Activated naive CD4-positive, alpha-beta T cell treated with anti-CD3 and anti-CD28 coated beads for 36 hours (primary cell): ENCODE measurements at regions of chr7 and their contacts with region 1.

Region 1: DNA sequence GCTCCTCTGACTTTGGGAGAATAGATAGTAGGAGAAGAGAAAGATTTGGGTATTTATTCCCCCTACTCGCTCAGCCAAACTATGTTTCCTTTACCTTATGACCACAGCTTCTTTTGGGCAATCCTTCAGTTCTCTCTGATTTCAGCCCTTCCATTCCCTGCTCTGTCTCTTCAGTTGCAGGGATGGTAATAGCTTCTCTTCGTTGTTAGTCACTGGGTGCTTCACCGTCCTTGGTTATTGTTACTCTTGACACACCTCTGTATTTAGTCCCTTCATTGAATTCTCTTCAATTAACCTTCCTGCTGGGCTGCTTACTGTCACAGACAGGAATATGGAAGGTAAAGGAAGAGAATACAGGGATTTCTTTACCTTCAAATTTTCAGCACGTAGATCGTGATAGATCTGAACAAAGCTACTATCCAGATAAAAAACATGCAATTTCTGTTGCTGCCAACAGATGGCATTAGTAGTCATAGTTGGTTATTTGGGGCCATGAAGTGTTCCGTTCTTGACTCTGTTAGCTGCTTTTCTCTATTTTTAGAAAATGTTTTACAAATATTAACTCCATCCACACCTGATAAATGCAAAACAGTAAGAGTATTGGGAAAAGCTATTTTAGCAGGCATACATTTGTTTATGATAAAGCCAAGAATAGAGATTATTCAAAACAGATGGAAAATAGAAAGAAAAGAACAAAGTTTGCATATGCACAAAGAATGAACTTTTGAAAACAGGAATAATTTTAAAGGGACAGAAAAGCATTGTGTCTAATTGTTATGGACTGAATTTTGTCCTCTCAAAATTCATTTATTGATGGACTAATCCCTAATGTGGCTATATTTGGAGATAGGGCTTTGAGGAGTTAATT is 14.0 kb upstream of the PTTG1IP2 start:
- DNase-seq: no peak
- H3K4me3 Mint-ChIP-seq: no peak overlapping the region
- H3K27ac Mint-ChIP-seq: no peak overlapping the region
- H3K4me1 Mint-ChIP-seq: peaks cover 5% of the 10 kb centered on the region
- H3K27me3 Mint-ChIP-seq: peaks cover 3% of the 10 kb centered on the region

Region 2: DNA sequence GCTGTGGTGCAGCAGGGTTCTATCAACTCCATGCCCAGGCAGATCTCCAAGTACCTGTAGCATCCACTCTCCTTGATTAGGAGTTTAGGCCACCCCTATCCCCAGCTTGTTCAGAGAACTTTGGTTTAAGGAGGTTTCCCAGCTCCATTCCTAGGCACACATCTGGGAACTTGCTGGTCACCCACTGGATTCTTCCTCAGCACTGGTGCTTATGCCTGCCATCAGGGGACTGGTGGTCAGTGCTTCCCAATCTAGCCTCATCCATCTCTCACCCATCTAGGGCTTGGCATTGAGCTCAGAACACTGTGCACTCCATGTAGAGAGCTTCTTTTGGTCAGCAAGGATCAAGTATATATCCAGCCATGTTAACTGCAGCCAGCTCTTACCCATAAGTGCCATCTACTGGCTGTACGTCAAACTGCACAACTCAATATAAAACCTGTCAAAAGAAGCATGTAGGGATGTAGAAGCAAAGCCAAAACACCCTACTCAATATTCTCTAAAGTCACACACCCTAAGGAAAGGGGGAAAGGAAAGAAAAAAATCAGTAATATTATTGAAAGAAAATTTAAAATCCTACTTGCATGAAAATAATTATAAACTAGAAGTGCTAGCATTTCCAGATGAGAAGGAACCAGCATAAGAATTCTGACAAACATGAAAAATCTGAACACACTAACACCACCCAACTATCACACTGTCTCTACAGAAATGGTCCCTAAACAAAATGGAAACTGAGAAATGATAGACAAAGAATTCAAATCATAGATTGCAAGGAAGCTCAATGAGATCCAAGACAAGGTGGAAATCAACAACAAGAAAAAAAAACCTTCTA is 832.3 kb before region 1 on chr7:
- CTCF ChIA-PET with region 1: no interaction called
- intact Hi-C with region 1: no loop called
- DNase-seq: peak; percentile 56
- H3K4me3 Mint-ChIP-seq: no peak overlapping the region
- H3K27ac Mint-ChIP-seq: no peak overlapping the region
- H3K4me1 Mint-ChIP-seq: peaks cover 41% of the 10 kb centered on the region
- H3K27me3 Mint-ChIP-seq: no peaks in the 10 kb centered on the region

Region 3: DNA sequence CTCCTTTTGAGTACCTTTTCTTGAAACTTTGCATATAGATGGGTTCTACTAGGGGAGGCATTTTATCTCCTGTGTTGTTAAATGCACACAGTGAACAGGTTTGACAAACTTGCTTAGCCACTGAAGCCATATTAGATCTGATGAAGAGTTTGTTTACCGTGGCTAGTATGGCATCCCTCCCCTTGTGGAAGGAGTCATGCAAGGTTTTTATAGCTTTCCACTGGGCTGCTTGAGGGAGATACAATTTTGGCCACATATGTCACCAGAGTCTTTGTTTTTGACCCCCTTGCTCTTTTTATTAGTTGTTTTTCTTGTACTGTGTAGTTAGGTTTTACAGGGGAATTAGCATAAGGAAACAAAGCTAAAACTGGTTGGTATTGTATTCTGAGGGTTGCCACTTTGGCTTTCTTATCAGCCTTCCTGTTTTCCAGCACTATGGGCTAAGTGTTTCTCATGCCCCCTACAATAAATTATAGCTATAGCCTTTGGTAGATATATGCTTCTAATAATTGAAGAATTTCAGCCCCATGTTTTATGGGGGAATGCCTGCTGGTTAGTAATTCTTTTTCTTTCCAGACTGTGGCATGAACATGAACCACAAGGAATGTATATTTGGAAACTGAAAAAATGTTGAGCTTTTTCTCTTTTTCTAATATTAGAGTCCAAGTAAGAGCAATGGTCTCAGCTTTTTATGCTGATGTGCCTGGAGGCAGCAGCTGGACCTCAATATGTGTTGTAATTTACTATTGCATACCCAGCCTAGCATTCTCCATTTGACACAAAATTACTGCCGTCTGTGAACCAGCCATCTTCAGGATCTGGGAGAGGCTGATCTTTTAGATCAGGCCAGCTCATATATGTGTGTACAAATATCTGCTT is 262.3 kb before region 1 on chr7:
- CTCF ChIA-PET with region 1: no interaction called
- intact Hi-C with region 1: no loop called
- DNase-seq: no peak
- H3K4me3 Mint-ChIP-seq: no peak overlapping the region
- H3K27ac Mint-ChIP-seq: no peak overlapping the region
- H3K4me1 Mint-ChIP-seq: no peaks in the 10 kb centered on the region
- H3K27me3 Mint-ChIP-seq: peaks cover 2% of the 10 kb centered on the region

Region 4: GRCh38 chr7:90520484-90520883 is 65.1 kb after region 1 on chr7:
- CTCF ChIA-PET with region 1: interaction called, 4 read pairs
- intact Hi-C with region 1: loop called (anchors 2 kb)
- DNase-seq: no peak
- H3K4me3 Mint-ChIP-seq: no peak overlapping the region
- H3K27ac Mint-ChIP-seq: no peak overlapping the region
- H3K4me1 Mint-ChIP-seq: no peaks in the 10 kb centered on the region
- H3K27me3 Mint-ChIP-seq: peaks cover 1% of the 10 kb centered on the region

Region 5: GRCh38 chr7:90629297-90629918 is 174.0 kb after region 1 on chr7:
- CTCF ChIA-PET with region 1: interaction called, 19 read pairs
- intact Hi-C with region 1: loop called (anchors 1 kb)
- DNase-seq: peak; percentile 12
- H3K4me3 Mint-ChIP-seq: no peak overlapping the region
- H3K27ac Mint-ChIP-seq: no peak overlapping the region
- H3K4me1 Mint-ChIP-seq: no peaks in the 10 kb centered on the region
- H3K27me3 Mint-ChIP-seq: peaks cover 4% of the 10 kb centered on the region

Region 6: DNA sequence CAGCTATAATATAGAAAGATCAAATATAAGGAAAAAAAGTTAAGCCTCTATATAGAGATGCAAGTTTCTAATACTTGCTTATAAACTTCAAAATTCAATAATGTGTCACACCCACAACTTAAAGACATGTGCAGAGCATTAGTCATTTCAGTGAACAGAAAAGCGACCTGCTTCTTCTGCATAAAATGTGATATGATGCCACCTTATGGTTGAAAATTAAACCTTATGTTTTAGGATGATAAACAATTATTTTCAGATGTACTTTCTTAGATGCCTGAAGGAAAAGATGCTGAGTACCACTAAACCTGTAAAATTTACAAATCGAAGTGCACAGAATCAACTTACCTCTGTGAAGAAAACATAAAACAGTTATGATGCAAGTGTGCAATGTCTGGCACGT is 1329.1 kb after region 1 on chr7:
- CTCF ChIA-PET with region 1: no interaction called
- intact Hi-C with region 1: loop called (anchors 10 kb)
- DNase-seq: no peak
- H3K4me3 Mint-ChIP-seq: no peak overlapping the region
- H3K27ac Mint-ChIP-seq: no peak overlapping the region
- H3K4me1 Mint-ChIP-seq: no peaks in the 10 kb centered on the region
- H3K27me3 Mint-ChIP-seq: no peaks in the 10 kb centered on the region